ENCODE measurements at regions of chr11 and their contacts with region 1.

Region 1: GRCh38 chr11:123560006-123560405 is 94.4 kb downstream of the SCN3B start:
- DNase-seq: peak; percentile 63
- CTCF ChIP-seq: no peak

Region 2: GRCh38 chr11:122743949-122744348 is 816.1 kb before region 1 on chr11:
- in situ Hi-C with region 1: no loop called
- DNase-seq: peak; percentile 73
- CTCF ChIP-seq: no peak

Region 3: GRCh38 chr11:123103326-123103980 is 456.6 kb before region 1 on chr11:
- in situ Hi-C with region 1: loop called (anchors 25 kb)
- DNase-seq: peak; percentile 39
- CTCF ChIP-seq: peak; percentile 19

Region 4: DNA sequence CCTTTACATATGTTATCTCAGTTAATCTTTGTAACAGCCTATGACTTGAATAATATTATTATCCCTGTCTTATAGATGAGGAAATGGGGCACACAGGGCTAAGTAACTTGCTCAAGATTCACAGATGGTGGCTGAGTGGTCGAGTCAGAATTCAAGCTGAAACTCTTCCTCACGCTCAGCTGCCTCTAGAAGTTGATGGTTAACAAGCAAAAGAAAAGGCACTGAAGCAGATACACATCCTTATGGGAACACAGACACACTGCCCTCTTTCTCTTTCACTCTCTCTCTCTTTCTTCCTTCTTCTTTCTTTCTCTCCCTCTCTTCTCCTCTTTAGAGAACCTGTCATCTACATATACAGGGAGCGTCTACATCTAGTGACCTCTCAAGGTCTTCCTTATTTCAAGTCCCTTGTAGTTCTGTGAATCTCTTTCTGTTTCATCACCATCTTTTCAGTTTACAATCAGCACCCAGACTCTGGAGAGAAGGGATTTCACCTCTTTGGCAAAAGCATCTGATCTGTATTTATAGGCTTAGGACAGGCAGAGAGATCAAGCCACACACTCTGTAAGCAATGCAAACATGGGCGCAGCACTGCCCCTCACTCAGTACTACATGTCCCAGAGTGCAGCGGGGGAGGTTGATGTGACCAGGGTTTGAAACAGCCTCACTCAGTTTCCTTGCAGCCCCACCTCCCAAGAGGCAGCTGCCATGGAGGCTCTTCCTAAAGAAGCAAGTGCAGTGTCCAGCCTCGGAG is 54.3 kb before region 1 on chr11:
- in situ Hi-C with region 1: no loop called
- DNase-seq: no peak
- CTCF ChIP-seq: no peak

Measured in GM13976 (cell line).